ENCODE measurements at regions of chr7 and their contacts with region 1.

Region 1: GRCh38 chr7:149028346-149029109 is at the start of gene PDIA4:
- DNase-seq: peak; percentile 100
- H3K4me3 Mint-ChIP-seq: peak within 1 kb of the TSS; percentile 96
- H3K27ac Mint-ChIP-seq: peak within 1 kb of the TSS; percentile 88
- H3K4me1 Mint-ChIP-seq: peaks cover 33% of the 10 kb centered on the region
- H3K27me3 Mint-ChIP-seq: no peaks in the 10 kb centered on the region
- total RNA-seq, gene PDIA4: 108 to 112 TPM

Region 2: DNA sequence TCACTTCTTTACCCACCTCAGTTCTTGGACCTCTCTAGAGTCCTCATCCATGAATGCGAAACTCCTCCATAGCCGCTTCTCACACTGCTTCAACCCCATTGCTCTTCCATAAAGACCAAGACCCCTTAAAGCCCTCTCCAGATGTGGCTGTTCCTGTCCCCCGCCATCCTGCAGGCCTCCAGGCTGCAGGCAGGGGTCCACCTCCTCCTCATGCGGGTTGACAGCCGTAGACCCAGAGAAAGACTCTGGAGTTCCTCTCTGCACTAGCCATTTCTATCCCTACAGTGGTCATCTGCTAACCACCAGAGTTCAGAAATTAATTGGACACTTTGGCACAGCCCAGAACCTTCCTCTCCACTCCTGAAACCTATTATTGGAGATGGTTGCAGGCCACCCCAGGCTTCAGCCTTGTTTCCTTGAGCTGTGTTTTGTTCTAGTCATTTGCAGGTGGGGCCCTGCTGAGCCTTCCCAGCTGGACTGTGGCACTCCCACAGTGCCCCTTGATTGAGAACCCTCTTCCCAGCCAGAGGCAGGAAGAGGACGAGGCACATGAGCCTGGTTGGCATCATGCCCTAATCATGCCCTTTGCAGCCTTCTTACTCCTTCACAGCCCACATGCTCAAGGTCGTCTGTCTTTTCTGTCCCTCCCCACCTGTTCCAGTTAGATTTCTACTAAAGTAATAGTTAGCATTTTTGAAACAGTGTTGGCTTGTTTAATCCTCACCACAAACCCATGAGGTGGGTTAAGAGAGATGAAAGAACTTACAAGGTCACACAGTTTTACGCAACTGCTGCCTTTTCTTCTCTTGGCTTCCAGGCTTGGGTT is 306.0 kb before region 1 on chr7:
- CTCF ChIA-PET with region 1: no interaction called
- POLR2A ChIA-PET with region 1: no interaction called
- intact Hi-C with region 1: no loop called
- DNase-seq: no peak
- H3K4me3 Mint-ChIP-seq: no peak overlapping the region
- H3K27ac Mint-ChIP-seq: no peak overlapping the region
- H3K4me1 Mint-ChIP-seq: peaks cover 81% of the 10 kb centered on the region
- H3K27me3 Mint-ChIP-seq: no peaks in the 10 kb centered on the region

Region 3: GRCh38 chr7:148884299-148885022 is 144.1 kb before region 1 on chr7:
- CTCF ChIA-PET with region 1: no interaction called
- POLR2A ChIA-PET with region 1: interaction called, 5 read pairs
- intact Hi-C with region 1: loop called (anchors 1 kb)
- DNase-seq: peak; percentile 96
- H3K4me3 Mint-ChIP-seq: peak overlapping the region; percentile 92
- H3K27ac Mint-ChIP-seq: peak overlapping the region; percentile 98
- H3K4me1 Mint-ChIP-seq: peaks cover 31% of the 10 kb centered on the region
- H3K27me3 Mint-ChIP-seq: no peaks in the 10 kb centered on the region

Region 4: GRCh38 chr7:148914208-148914777 is 114.2 kb before region 1 on chr7:
- CTCF ChIA-PET with region 1: no interaction called
- POLR2A ChIA-PET with region 1: interaction called, 7 read pairs
- intact Hi-C with region 1: loop called (anchors 1 kb)
- DNase-seq: peak; percentile 87
- H3K4me3 Mint-ChIP-seq: peak overlapping the region; percentile 62
- H3K27ac Mint-ChIP-seq: peak overlapping the region; percentile 93
- H3K4me1 Mint-ChIP-seq: peaks cover 66% of the 10 kb centered on the region
- H3K27me3 Mint-ChIP-seq: no peaks in the 10 kb centered on the region

Region 5: GRCh38 chr7:149005241-149006050 is 23.1 kb before region 1 on chr7:
- CTCF ChIA-PET with region 1: interaction called, 19 read pairs
- POLR2A ChIA-PET with region 1: interaction called, 4 read pairs
- intact Hi-C with region 1: loop called (anchors 1 kb)
- DNase-seq: peak; percentile 85
- H3K4me3 Mint-ChIP-seq: no peak overlapping the region
- H3K27ac Mint-ChIP-seq: no peak overlapping the region
- H3K4me1 Mint-ChIP-seq: peaks cover 3% of the 10 kb centered on the region
- H3K27me3 Mint-ChIP-seq: no peaks in the 10 kb centered on the region

Region 6: GRCh38 chr7:149050941-149051340 is 22.4 kb after region 1 on chr7:
- CTCF ChIA-PET with region 1: no interaction called
- POLR2A ChIA-PET with region 1: no interaction called
- intact Hi-C with region 1: no loop called
- DNase-seq: no peak
- H3K4me3 Mint-ChIP-seq: no peak overlapping the region
- H3K27ac Mint-ChIP-seq: no peak overlapping the region
- H3K4me1 Mint-ChIP-seq: no peaks in the 10 kb centered on the region
- H3K27me3 Mint-ChIP-seq: peaks cover 2% of the 10 kb centered on the region

Region 7: GRCh38 chr7:149090397-149091195 is 62.1 kb after region 1 on chr7 and contains the start of gene ZNF786:
- CTCF ChIA-PET with region 1: no interaction called
- POLR2A ChIA-PET with region 1: no interaction called
- intact Hi-C with region 1: loop called (anchors 1 kb)
- DNase-seq: peak; percentile 96
- H3K4me3 Mint-ChIP-seq: peak within 1 kb of the TSS; percentile 96
- H3K27ac Mint-ChIP-seq: peak within 1 kb of the TSS; percentile 99
- H3K4me1 Mint-ChIP-seq: peaks cover 21% of the 10 kb centered on the region
- H3K27me3 Mint-ChIP-seq: no peaks in the 10 kb centered on the region
- total RNA-seq, gene ZNF786: 4.5 to 6.1 TPM

Region 8: GRCh38 chr7:149125863-149126661 is 97.5 kb after region 1 on chr7 and contains the start of gene ZNF425:
- CTCF ChIA-PET with region 1: interaction called, 8 read pairs
- POLR2A ChIA-PET with region 1: interaction called, 6 read pairs
- intact Hi-C with region 1: loop called (anchors 2 kb)
- DNase-seq: peak; percentile 95
- H3K4me3 Mint-ChIP-seq: peak within 1 kb of the TSS; percentile 98
- H3K27ac Mint-ChIP-seq: peak within 1 kb of the TSS; percentile 98
- H3K4me1 Mint-ChIP-seq: peaks cover 18% of the 10 kb centered on the region
- H3K27me3 Mint-ChIP-seq: no peaks in the 10 kb centered on the region
- total RNA-seq, gene ZNF425: 0.74 to 0.75 TPM

Region 9: DNA sequence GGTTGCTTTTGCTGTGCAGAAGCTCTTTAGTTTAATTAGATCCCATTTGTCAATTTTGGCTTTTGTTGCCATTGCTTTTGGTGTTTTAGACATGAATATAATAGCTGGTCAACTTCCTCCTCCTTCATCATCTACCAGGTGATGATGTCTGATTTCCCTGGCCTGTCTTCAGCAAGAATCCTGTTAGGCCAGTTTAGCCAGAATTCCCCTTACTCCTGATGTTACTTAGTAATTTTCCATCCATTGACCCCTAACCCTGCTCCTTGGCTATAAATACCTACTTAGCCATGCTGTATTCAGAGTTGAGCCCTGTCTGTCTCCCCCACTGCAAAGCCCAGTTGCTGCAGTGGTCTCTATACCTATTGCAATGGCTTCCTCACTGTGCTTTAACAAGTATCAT is 341.0 kb after region 1 on chr7:
- CTCF ChIA-PET with region 1: no interaction called
- POLR2A ChIA-PET with region 1: no interaction called
- intact Hi-C with region 1: no loop called
- DNase-seq: no peak
- H3K4me3 Mint-ChIP-seq: no peak overlapping the region
- H3K27ac Mint-ChIP-seq: no peak overlapping the region
- H3K4me1 Mint-ChIP-seq: no peaks in the 10 kb centered on the region
- H3K27me3 Mint-ChIP-seq: peaks cover 17% of the 10 kb centered on the region

Region 10: DNA sequence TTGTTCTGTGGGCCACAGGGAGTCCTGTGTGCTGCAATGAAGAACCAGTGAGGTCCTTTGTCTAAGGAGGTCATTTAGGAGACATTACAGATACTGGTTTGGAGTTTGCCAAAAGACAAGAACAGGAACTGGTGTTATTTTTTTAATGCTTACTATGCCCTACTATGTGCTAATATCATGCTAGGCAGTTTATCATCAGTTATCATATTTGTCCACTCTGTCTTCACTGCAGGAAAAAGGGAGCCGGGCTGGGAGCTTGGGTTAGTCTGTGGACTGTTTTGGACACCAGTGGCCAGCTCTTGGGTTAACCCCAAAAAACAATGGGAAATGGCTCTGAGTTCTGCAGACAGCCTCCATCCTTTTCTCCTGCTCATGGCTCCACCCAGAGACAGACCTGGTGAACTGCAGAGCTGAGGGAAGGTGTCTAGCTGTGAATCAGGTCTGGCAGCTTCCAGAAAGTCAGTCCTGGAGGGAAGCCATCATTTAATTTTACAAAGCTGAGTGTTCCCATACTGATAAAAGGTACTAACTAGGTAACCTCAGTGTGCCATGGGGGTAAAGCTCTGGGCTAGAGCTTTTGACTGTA is 570.3 kb after region 1 on chr7:
- CTCF ChIA-PET with region 1: no interaction called
- POLR2A ChIA-PET with region 1: no interaction called
- intact Hi-C with region 1: loop called (anchors 10 kb)
- DNase-seq: peak; percentile 66
- H3K4me3 Mint-ChIP-seq: no peak overlapping the region
- H3K27ac Mint-ChIP-seq: peak overlapping the region; percentile 72
- H3K4me1 Mint-ChIP-seq: peaks cover 35% of the 10 kb centered on the region
- H3K27me3 Mint-ChIP-seq: no peaks in the 10 kb centered on the region